ENCODE measurements at regions of chr6 and their contacts with region 1.

Region 1: GRCh38 chr6:36123257-36124139 is 6.8 kb upstream of the MAPK13 start:
- DNase-seq: peak; percentile 69
- ATAC-seq: peak; percentile 83
- H3K4me3 ChIP-seq: no peak overlapping the region
- H3K27ac ChIP-seq: no peak overlapping the region
- H3K4me1 ChIP-seq: peaks cover 22% of the 10 kb centered on the region
- H3K27me3 ChIP-seq: no peaks in the 10 kb centered on the region
- CTCF ChIP-seq: peak; percentile 81
- POLR2A ChIP-seq: no peak
- RAD21 ChIP-seq: peak; percentile 78

Region 2: DNA sequence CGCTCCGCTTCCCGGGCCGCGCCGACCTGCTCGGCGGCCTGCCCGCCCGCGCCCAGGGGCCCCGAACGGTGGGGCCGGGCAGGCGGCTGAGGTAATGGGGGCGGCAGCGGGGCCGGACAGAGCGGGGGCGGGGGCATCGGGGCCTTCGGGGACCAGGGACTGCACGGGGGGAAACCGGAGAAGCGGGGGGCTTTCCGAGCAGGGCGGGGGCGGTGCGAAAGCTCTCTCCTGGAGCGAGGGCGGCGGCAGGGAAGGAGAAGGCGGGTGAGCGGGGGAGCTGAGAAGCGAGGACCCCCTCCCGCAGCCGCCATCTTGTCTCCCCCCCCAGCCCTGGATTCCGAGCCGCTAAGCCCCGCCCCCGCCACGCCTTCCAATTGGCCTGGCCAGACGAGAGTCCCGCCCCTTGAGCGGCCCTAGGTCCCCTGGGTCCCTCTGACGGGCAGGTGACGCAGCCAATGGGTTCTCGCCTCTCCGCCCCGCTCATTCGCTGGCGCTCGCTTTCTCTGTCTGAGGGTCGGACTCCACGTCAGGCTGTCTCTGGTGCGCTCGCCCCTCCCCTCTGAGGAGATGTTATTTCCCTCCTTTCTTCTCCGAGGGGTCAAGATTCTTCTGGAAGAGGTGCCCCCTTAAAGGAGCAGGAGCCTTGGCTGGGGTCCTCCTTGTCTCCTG is 73.5 kb after region 1 on chr6:
- CTCF ChIA-PET with region 1: no interaction called
- POLR2A ChIA-PET with region 1: no interaction called
- dilution Hi-C with region 1: no loop called
- in situ Hi-C with region 1: loop called (anchors 5 kb)
- intact Hi-C with region 1: loop called (anchors 1 kb)
- DNase-seq: peak; percentile 96
- ATAC-seq: peak; percentile 95
- H3K4me3 ChIP-seq: peak overlapping the region; percentile 65
- H3K27ac ChIP-seq: peak overlapping the region; percentile 97
- H3K4me1 ChIP-seq: peaks cover 6% of the 10 kb centered on the region; the same call in 1 of the 2 replicates
- H3K27me3 ChIP-seq: no peaks in the 10 kb centered on the region
- CTCF ChIP-seq: no peak
- POLR2A ChIP-seq: peak; percentile 57; the same call in 1 of the 2 replicates
- RAD21 ChIP-seq: no peak

Region 3: DNA sequence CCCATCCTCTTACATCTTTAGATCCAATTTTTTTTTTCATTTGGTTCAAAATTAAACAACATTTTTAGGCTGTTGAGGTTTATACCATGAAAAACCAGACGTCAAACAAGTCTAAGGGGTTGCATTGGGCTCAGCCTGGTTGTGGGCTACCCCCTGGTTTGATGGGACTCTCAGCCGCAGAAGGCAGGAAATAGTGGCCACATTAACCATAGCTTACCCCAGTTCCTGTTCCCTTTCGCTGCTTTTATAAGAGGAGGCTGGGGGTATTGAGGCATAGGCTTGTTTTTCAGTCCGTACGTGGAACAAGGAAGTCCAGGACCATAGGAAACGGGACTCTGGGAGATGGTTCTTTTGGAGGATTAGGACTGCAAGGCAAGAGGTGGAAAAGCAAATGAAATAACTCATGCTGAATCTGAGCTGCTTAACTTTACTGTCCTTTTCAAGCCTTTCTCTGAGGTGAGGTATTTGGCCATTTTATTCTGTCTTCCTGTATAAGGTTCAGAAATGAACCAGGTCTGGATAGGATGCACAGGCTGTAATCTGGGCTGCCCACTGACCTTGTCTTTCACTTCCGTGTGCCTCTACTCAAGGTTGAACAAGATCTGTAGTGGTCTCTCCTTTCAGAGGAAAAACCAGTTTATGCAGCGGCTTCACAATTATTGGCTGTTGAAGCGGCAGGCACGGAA is 80.7 kb after region 1 on chr6:
- CTCF ChIA-PET with region 1: no interaction called
- POLR2A ChIA-PET with region 1: no interaction called
- dilution Hi-C with region 1: no loop called
- in situ Hi-C with region 1: loop called (anchors 5 kb)
- intact Hi-C with region 1: no loop called
- DNase-seq: no peak
- ATAC-seq: no peak
- H3K4me3 ChIP-seq: no peak overlapping the region
- H3K27ac ChIP-seq: no peak overlapping the region
- H3K4me1 ChIP-seq: no peaks in the 10 kb centered on the region
- H3K27me3 ChIP-seq: no peaks in the 10 kb centered on the region
- CTCF ChIP-seq: no peak
- POLR2A ChIP-seq: no peak
- RAD21 ChIP-seq: no peak